CD4-positive, alpha-beta T cell (primary cell): ENCODE measurements at regions of chr10 and their contacts with region 1.

Region 1: GRCh38 chr10:8059959-8060703 is 5.6 kb downstream of the GATA3 start:
- DNase-seq: peak in 10 of 14 experiments; percentile 47 to 88 (median 63)
- ATAC-seq: peak; percentile 51
- H3K4me3 ChIP-seq: peak overlapping the region; percentile 96
- H3K4me3 Mint-ChIP-seq: peak overlapping the region; percentile 94
- H3K27ac ChIP-seq: peak overlapping the region; percentile 69 to 76
- H3K27ac Mint-ChIP-seq: peak overlapping the region; percentile 97
- H3K4me1 ChIP-seq: peaks cover 73% of the 10 kb centered on the region
- H3K4me1 Mint-ChIP-seq: peaks cover 81% of the 10 kb centered on the region
- H3K27me3 ChIP-seq: no peaks in the 10 kb centered on the region
- H3K27me3 Mint-ChIP-seq: no peaks in the 10 kb centered on the region
- CTCF ChIP-seq: no peak

Region 2: DNA sequence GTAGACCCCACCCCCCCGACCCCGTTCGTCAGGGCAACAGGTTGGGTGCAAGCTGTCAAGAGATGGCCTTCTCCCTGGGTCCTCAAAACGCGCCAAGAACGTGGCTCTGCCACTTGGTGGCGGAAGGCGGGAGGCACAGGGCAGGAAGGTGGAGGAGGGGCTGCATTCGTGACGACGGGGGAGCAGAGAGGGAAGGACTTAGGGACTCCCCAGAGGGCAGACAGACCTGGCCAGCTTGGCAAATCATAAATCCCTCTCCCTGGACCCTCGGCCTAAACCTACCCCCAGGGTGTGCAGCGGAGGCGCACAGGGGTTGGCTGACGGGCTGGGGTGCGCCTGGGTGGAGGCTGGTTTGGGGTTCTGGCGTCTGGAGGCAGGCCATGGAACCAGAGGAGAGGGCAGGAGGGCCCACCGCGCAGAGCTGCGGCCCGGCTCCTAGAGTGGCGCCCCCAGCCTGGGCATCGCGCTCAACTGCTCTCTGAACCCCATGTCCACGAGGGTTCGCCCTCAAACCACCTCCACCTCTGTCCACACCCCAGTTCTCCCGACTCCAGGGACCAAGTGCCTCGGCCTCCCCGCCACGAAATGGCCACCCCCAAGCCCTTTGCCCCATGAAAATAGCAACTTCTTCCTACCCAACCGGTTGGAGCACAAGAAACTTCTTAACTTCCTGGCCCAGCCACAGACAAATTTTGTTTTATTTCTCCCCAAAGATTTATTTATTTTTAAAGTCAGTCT is 16.4 kb before region 1 on chr10:
- CTCF ChIA-PET with region 1: no interaction called
- POLR2A ChIA-PET with region 1: interaction called, 37 read pairs
- intact Hi-C with region 1: no loop called
- DNase-seq: peak in 9 of 14 experiments; percentile 28 to 80 (median 49)
- ATAC-seq: peak; percentile 54
- H3K4me3 ChIP-seq: no peak overlapping the region
- H3K4me3 Mint-ChIP-seq: peak overlapping the region; percentile 66
- H3K27ac ChIP-seq: no peak overlapping the region
- H3K27ac Mint-ChIP-seq: peak overlapping the region; percentile 34
- H3K4me1 ChIP-seq: peaks cover 70% of the 10 kb centered on the region
- H3K4me1 Mint-ChIP-seq: peaks cover 78% of the 10 kb centered on the region
- H3K27me3 ChIP-seq: peaks cover 97 to 99% of the 10 kb centered on the region in 2 experiments
- H3K27me3 Mint-ChIP-seq: peaks cover 99% of the 10 kb centered on the region
- CTCF ChIP-seq: peak; percentile 21

Region 3: DNA sequence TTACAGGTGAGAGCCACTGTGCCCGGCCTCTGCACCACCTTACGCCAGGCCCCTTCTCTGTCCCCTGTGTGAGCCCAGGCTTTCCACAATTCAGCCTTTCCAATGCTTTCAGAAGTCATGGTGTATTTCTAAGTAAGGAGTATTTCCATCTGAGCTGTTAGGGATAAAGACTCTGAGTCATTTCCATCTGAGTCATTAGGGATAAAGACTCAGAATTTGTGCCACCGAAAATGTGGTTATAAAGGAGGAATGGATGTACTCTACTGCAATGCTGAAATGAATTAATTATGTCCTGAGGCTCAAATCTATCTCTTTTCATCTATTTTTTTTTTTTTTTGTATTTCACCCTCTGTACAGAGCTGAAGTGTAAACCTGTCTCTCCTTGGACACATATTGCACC is 78.3 kb after region 1 on chr10:
- CTCF ChIA-PET with region 1: no interaction called
- POLR2A ChIA-PET with region 1: interaction called, 30 read pairs
- intact Hi-C with region 1: loop called (anchors 5 kb)
- DNase-seq: no peak
- ATAC-seq: no peak
- H3K4me3 ChIP-seq: no peak overlapping the region
- H3K4me3 Mint-ChIP-seq: peak overlapping the region; percentile 88
- H3K27ac ChIP-seq: no peak overlapping the region
- H3K27ac Mint-ChIP-seq: peak overlapping the region; percentile 90
- H3K4me1 ChIP-seq: peaks cover 23% of the 10 kb centered on the region
- H3K4me1 Mint-ChIP-seq: peaks cover 30% of the 10 kb centered on the region
- H3K27me3 ChIP-seq: no peaks in the 10 kb centered on the region
- H3K27me3 Mint-ChIP-seq: no peaks in the 10 kb centered on the region
- CTCF ChIP-seq: no peak

Region 4: GRCh38 chr10:8238986-8239385 is 178.9 kb after region 1 on chr10:
- CTCF ChIA-PET with region 1: no interaction called
- POLR2A ChIA-PET with region 1: interaction called, 11 read pairs
- intact Hi-C with region 1: loop called (anchors 5 to 10 kb)
- DNase-seq: peak in 4 of 14 experiments; percentile 27 to 59 (median 36)
- ATAC-seq: peak; percentile 57
- H3K4me3 ChIP-seq: no peak overlapping the region
- H3K4me3 Mint-ChIP-seq: peak overlapping the region; percentile 49
- H3K27ac ChIP-seq: no peak overlapping the region
- H3K27ac Mint-ChIP-seq: peak overlapping the region; percentile 26
- H3K4me1 ChIP-seq: peaks cover 40% of the 10 kb centered on the region
- H3K4me1 Mint-ChIP-seq: peaks cover 58% of the 10 kb centered on the region
- H3K27me3 ChIP-seq: no peaks in the 10 kb centered on the region
- H3K27me3 Mint-ChIP-seq: no peaks in the 10 kb centered on the region
- CTCF ChIP-seq: no peak

Region 5: DNA sequence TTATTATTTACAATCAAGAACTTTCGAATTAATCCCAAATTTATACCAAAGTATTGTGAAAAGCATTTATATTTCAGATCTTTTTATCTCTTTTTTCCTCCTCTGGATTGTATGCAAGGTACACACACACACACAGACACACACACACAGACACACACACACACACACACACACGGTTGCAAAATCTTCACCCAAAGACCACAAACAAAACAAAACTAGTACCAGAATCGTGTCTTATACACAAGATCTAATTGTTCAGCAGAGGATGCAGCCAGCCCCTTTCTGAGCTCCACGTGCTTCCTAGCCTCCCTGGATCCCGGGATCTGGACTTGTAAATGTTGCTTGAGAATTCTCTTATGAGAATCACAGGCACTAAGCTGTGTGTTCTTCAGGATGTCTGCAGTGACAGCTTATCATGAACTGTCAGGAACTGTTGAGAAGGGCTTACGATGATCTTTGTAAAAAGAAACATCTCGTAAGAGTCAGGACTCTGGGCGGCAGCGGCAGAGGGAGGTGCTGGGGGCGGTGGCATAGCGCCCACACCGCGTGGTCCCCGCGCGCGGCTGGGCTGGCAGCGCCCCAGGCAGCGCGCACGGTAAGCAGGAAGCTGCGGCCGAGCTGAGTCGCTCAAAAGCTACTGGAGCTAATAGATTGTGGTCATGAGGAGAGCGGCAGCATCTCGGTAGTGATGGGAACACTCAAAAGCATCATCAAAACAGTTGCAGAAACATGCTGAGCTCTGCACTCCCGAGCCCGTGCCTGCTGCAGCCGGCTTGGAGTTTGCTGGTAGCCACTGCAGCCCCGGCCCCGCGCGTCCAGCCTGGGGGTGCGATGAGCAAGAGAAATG is 272.0 kb after region 1 on chr10:
- CTCF ChIA-PET with region 1: interaction called, 3 read pairs
- POLR2A ChIA-PET with region 1: interaction called, 64 read pairs
- intact Hi-C with region 1: loop called (anchors 1 to 2 kb)
- DNase-seq: peak; percentile 80 to 98 (median 88)
- ATAC-seq: peak; percentile 90
- H3K4me3 ChIP-seq: peak overlapping the region; percentile 61
- H3K4me3 Mint-ChIP-seq: peak overlapping the region; percentile 68
- H3K27ac ChIP-seq: peak overlapping the region; percentile 84 to 89
- H3K27ac Mint-ChIP-seq: peak overlapping the region; percentile 86
- H3K4me1 ChIP-seq: peaks cover 23% of the 10 kb centered on the region
- H3K4me1 Mint-ChIP-seq: peaks cover 44% of the 10 kb centered on the region
- H3K27me3 ChIP-seq: no peaks in the 10 kb centered on the region
- H3K27me3 Mint-ChIP-seq: no peaks in the 10 kb centered on the region
- CTCF ChIP-seq: no peak

Region 6: GRCh38 chr10:9097206-9097985 is 1037.3 kb after region 1 on chr10:
- CTCF ChIA-PET with region 1: no interaction called
- POLR2A ChIA-PET with region 1: interaction called, 6 read pairs
- intact Hi-C with region 1: loop called in 1 of 2 experiments (anchors 5 kb)
- DNase-seq: peak in 3 of 14 experiments; percentile 58 to 81 (median 70)
- ATAC-seq: peak; percentile 62
- H3K4me3 ChIP-seq: no peak overlapping the region
- H3K4me3 Mint-ChIP-seq: peak overlapping the region; percentile 72
- H3K27ac ChIP-seq: no peak overlapping the region
- H3K27ac Mint-ChIP-seq: peak overlapping the region; percentile 88
- H3K4me1 ChIP-seq: peaks cover 17% of the 10 kb centered on the region
- H3K4me1 Mint-ChIP-seq: peaks cover 43% of the 10 kb centered on the region
- H3K27me3 ChIP-seq: no peaks in the 10 kb centered on the region
- H3K27me3 Mint-ChIP-seq: no peaks in the 10 kb centered on the region
- CTCF ChIP-seq: no peak